Dorsolateral prefrontal cortex (tissue), 120 donors: ENCODE measurements at regions of chr19 and their contacts with region 1.

Region 1: GRCh38 chr19:52570000-52570861 is at the start of gene ZNF701:
- DNase-seq: peak; percentile 92 to 98 (median 96)
- H3K4me3 ChIP-seq: peak within 1 kb of the TSS; percentile 49 to 89 (median 76)
- H3K27ac ChIP-seq: peak within 1 kb of the TSS in 58 of 59 donors; percentile 3 to 96 (median 77)
- H3K27me3 ChIP-seq: no peaks in the 10 kb centered on the region
- CTCF ChIP-seq: peak in 47 of 56 donors; percentile 13 to 63 (median 45)
- total RNA-seq, gene ZNF701: 11.8 to 41.0 (median 20.6) TPM

Region 2: GRCh38 chr19:52527134-52527955 is 42.9 kb before region 1 on chr19 and contains the start of gene ZNF808:
- intact Hi-C with region 1: loop called (anchors 2 to 5 kb)
- DNase-seq: peak; percentile 81 to 97 (median 90)
- H3K4me3 ChIP-seq: peak within 1 kb of the TSS; percentile 45 to 93 (median 78)
- H3K27ac ChIP-seq: peak within 1 kb of the TSS; percentile 49 to 97 (median 82)
- H3K27me3 ChIP-seq: no peaks in the 10 kb centered on the region
- CTCF ChIP-seq: peak in 50 of 56 donors; percentile 8 to 63 (median 43)
- total RNA-seq, gene ZNF808: 16.2 to 39.5 (median 27.7) TPM

Region 3: DNA sequence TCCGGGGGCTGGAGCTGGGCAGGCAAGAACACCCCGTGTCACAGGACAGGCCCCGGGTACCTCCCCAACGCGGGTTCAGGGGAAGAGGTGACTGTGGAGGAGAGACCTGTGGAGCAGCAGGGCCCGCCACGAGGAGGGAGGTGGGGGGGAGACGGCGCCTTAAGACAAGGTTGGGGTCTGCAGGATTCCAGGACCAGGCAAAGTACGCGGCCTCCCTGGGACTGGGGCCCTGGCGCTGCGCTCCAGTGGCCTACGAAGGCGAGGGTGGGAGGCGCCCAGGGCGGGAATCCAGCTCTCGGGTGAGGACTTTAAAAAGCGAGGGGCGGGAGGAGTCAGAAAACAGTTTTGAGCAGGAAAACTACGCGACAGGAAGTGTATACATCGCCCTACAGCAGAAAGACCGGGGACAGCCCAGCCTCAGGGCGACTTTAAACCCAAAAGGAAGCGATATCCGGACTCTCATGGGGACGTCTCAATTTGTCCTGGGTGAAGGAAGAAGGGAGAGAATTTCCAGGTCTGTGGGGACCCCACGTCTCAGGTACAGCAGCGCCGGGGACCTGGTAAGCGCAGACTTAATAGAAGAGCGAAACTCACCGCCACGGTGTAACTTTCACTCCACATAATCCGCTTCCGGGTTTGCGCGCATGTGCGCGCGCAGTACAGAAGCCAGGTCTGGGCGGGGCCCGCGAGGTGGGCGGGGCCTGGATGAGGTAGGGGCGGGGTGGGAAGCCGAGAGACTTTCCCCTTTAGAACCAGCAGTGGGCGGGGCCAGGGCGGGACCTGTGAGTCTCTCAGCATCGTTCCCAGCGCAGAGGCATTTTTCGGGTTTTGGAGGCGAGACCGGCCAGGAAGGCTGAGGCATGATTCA is 67.7 kb after region 1 on chr19 and contains the start of gene ZNF83:
- intact Hi-C with region 1: no loop called
- DNase-seq: peak; percentile 81 to 97 (median 92)
- H3K4me3 ChIP-seq: peak within 1 kb of the TSS; percentile 59 to 94 (median 79)
- H3K27ac ChIP-seq: peak within 1 kb of the TSS in 49 of 59 donors; percentile 9 to 88 (median 66)
- H3K27me3 ChIP-seq: no peaks in the 10 kb centered on the region
- CTCF ChIP-seq: peak in 4 of 56 donors; percentile 11 to 14 (median 12)
- total RNA-seq, gene ZNF83: 30.2 to 101 (median 53.8) TPM